T-cell (primary cell): ENCODE measurements at regions of chr13 and their contacts with region 1.

Region 1: DNA sequence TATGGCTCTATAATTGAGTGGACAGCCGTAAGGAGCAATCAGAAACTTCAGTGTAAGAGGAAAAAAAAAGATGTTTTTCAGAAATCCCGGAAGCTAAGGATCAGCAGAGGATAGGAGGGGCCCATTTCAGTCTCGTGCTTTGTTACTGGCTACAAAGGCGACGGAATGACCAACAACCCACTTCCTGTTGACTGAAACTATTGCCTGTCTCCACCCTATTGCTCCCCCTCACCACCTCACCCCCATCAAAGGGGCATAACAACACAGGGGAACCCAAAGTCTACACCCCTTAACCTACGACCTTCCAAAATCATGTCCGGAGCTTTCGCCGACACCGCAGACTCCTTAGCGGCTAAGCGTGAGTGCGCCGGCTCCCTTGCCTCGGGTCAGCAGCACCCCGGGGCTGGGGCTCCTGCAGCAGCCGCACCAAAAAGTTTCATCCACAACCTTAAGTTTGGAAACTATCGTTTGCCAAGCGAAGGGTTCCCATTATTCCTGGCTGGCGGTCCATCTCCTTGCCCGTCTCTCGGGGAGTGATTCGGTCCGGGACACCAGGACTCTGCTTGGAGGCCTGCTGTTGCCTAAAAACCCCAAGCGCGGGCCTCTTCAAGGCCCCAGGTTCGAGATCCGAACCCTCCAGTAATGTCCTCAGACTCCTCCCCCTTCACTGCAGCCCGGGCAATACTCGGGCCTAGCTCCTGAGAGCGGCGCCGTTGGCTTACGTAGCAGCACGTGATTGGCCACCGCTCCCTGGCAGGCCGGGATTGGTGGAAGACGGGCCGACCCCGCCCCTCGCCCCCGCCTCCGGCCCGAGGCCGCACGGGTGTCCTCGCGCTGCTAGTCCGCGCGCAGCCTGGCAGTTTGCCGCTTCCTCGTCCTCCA is at the start of gene TPP2:
- DNase-seq: peak; percentile 89 to 99 (median 96)
- ATAC-seq: peak; percentile 83 to 86 (median 86)
- H3K4me3 ChIP-seq: peak within 1 kb of the TSS; percentile 97
- H3K4me3 Mint-ChIP-seq: peak within 1 kb of the TSS; percentile 92 to 99 (median 99)
- H3K27ac ChIP-seq: peak within 1 kb of the TSS; percentile 100
- H3K27ac Mint-ChIP-seq: peak within 1 kb of the TSS; percentile 100
- H3K4me1 ChIP-seq: peaks cover 37 to 42% of the 10 kb centered on the region in 2 experiments
- H3K4me1 Mint-ChIP-seq: peaks cover 69 to 70% (median 69%) of the 10 kb centered on the region in 3 donors
- H3K27me3 ChIP-seq: no peaks in the 10 kb centered on the region
- H3K27me3 Mint-ChIP-seq: no peaks in the 10 kb centered on the region
- total RNA-seq, gene TPP2: 111 to 135 (median 115) TPM

Region 2: DNA sequence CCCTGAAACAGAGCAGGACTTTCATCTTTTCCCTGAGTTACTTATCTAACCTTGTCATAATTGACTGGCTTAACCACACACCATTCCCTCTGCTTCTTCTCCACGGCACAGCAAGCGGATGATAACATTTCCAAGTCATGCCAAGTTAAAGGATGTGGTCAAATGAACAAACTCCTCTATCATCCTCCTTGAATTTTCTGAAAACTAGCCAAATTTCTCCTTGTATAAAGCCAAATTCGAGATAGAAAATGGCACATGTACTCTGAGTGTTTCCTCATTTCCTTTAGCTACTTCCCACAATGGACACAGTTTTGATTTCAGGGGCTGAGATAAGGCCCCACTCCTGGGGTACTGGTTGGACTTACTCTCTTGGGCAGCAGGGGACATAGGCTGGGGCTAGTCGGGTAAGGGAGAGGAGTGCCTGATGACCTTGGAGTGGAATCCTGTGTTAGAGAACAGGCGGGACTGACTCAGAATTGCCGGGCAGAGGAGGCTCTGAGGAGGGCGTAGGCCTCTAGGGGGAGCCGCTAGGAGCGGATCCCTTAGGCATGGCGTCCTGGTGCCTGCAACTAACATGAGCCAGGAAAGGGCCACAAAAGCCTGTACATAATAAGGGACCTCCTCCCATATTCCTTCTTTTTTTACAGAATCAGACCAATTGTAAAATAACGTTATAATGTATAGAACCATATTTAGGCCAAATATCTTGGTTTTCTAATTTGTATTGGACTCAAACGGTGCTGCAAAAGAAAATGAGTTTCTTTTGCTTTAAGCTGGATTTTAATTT is 1901.5 kb before region 1 on chr13:
- CTCF ChIA-PET with region 1: interaction called in 1 of 2 experiments, 10 read pairs
- POLR2A ChIA-PET with region 1: no interaction called
- DNase-seq: no peak
- ATAC-seq: no peak
- H3K4me3 ChIP-seq: no peak overlapping the region
- H3K4me3 Mint-ChIP-seq: no peak overlapping the region
- H3K27ac ChIP-seq: no peak overlapping the region
- H3K27ac Mint-ChIP-seq: no peak overlapping the region
- H3K4me1 ChIP-seq: no peaks in the 10 kb centered on the region
- H3K4me1 Mint-ChIP-seq: no peaks in the 10 kb centered on the region
- H3K27me3 ChIP-seq: peaks cover 0 to 19% of the 10 kb centered on the region in 2 experiments
- H3K27me3 Mint-ChIP-seq: peaks cover 16 to 23% of the 10 kb centered on the region in 2 donors

Region 3: DNA sequence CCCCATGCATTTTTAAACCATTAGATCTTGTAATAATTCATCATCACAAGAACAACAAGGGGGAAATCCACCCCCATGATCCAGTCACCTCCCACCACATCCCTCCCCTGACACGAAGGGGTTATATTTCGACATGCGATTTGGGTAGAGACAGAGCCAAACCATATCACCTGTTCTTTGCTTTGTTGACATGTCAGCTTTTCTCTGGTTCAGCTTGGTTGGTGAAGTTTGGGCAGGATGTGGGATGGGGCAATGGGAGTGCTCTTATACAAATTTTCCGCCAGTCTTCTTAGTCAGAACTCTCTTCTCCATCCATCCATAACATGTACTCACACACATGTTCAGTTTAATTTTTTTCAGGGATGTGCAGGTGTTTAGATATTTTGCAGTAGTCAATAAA is 13.3 kb after region 1 on chr13:
- CTCF ChIA-PET with region 1: interaction called, 6 to 14 read pairs
- POLR2A ChIA-PET with region 1: interaction called, 3 to 5 read pairs
- DNase-seq: peak in 7 of 35 experiments; percentile 2 to 25 (median 7)
- ATAC-seq: peak; percentile 24 to 70 (median 54)
- H3K4me3 ChIP-seq: no peak overlapping the region
- H3K4me3 Mint-ChIP-seq: no peak overlapping the region
- H3K27ac ChIP-seq: no peak overlapping the region
- H3K27ac Mint-ChIP-seq: peak overlapping the region; percentile 9 to 50
- H3K4me1 ChIP-seq: peaks cover 9 to 10% of the 10 kb centered on the region in 2 experiments
- H3K4me1 Mint-ChIP-seq: peaks cover 58 to 72% (median 63%) of the 10 kb centered on the region in 3 donors
- H3K27me3 ChIP-seq: no peaks in the 10 kb centered on the region
- H3K27me3 Mint-ChIP-seq: no peaks in the 10 kb centered on the region

Region 4: GRCh38 chr13:102626928-102627327 is 30.5 kb after region 1 on chr13:
- CTCF ChIA-PET with region 1: interaction called, 9 to 11 read pairs
- POLR2A ChIA-PET with region 1: interaction called, 3 to 12 read pairs
- DNase-seq: no peak
- ATAC-seq: no peak
- H3K4me3 ChIP-seq: no peak overlapping the region
- H3K4me3 Mint-ChIP-seq: no peak overlapping the region
- H3K27ac ChIP-seq: no peak overlapping the region
- H3K27ac Mint-ChIP-seq: no peak overlapping the region
- H3K4me1 ChIP-seq: no peaks in the 10 kb centered on the region
- H3K4me1 Mint-ChIP-seq: peaks cover 0 to 5% (median 0%) of the 10 kb centered on the region in 3 donors
- H3K27me3 ChIP-seq: no peaks in the 10 kb centered on the region
- H3K27me3 Mint-ChIP-seq: no peaks in the 10 kb centered on the region

Region 5: DNA sequence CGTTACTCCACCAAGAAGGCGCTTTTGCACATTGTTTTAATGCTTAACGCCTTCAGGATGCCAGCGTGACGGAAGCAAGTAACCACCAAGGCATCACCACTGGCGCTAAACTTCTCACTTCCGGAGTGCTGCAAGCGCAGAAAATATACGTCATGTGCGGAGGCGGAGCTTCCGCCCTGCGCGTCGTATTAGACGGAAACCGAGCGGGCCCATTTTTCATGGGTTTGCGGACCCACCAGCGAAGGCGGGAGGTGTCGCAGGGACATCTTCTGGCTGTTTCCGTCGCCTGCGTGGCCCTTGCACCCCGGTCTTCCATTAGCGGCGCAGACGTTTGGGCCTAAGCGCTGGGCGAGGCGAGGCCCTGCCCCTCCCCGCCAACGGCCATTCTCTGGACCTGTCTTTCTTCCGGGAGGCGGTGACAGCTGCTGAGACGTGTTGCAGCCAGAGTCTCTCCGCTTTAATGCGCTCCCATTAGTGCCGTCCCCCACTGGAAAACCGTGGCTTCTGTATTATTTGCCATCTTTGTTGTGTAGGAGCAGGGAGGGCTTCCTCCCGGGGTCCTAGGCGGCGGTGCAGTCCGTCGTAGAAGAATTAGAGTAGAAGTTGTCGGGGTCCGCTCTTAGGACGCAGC is 249.4 kb after region 1 on chr13 and contains the start of gene ERCC5:
- CTCF ChIA-PET with region 1: interaction called, 10 to 93 read pairs
- POLR2A ChIA-PET with region 1: interaction called, 11 to 30 read pairs
- DNase-seq: peak; percentile 92 to 99 (median 95)
- ATAC-seq: peak; percentile 78 to 82 (median 80)
- H3K4me3 ChIP-seq: peak within 1 kb of the TSS; percentile 78 to 100
- H3K4me3 Mint-ChIP-seq: peak within 1 kb of the TSS; percentile 91 to 98 (median 93)
- H3K27ac ChIP-seq: peak within 1 kb of the TSS; percentile 98
- H3K27ac Mint-ChIP-seq: peak within 1 kb of the TSS; percentile 98 to 99
- H3K4me1 ChIP-seq: peaks cover 17 to 24% of the 10 kb centered on the region in 2 experiments
- H3K4me1 Mint-ChIP-seq: peaks cover 41 to 50% (median 49%) of the 10 kb centered on the region in 3 donors
- H3K27me3 ChIP-seq: no peaks in the 10 kb centered on the region
- H3K27me3 Mint-ChIP-seq: no peaks in the 10 kb centered on the region
- total RNA-seq, gene ERCC5: 104 to 123 (median 114) TPM